ENCODE measurements at regions of chr2 and their contacts with region 1.

Region 1: GRCh38 chr2:39350658-39351057 is 86.4 kb downstream of the MAP4K3 start:
- DNase-seq: no peak
- ATAC-seq: no peak
- H3K4me3 Mint-ChIP-seq: no peak overlapping the region
- H3K27ac Mint-ChIP-seq: no peak overlapping the region
- H3K4me1 Mint-ChIP-seq: no peaks in the 10 kb centered on the region
- H3K27me3 Mint-ChIP-seq: no peaks in the 10 kb centered on the region
- CTCF ChIP-seq: no peak

Region 2: DNA sequence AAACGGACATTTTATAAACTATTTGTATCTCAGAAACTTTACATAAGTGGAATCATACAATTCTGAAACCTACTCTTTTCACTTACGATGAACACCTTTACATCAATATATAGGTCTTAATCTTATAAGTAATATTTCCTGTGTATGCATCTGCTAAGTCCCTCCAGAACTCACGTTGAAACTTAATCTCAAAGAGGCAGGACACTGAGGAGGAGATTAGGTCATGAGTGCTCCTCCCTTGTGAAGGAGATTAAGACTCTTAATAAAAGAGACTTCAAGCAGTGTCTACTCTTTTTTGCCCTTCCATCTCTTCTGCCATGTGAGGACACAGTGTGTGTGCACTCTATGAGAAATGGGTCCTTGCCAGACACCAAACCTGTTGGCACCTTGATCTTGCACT is 12.2 kb before region 1 on chr2:
- CTCF ChIA-PET with region 1: no interaction called
- POLR2A ChIA-PET with region 1: no interaction called
- intact Hi-C with region 1: loop called (anchors 1 kb)
- DNase-seq: no peak
- ATAC-seq: no peak
- H3K4me3 Mint-ChIP-seq: no peak overlapping the region
- H3K27ac Mint-ChIP-seq: no peak overlapping the region
- H3K4me1 Mint-ChIP-seq: no peaks in the 10 kb centered on the region
- H3K27me3 Mint-ChIP-seq: no peaks in the 10 kb centered on the region
- CTCF ChIP-seq: no peak

Measured in activated B cell treated with CpG ODN at 0.5 μM for 24 hours (primary cell).